Dorsolateral prefrontal cortex (tissue), 120 donors: ENCODE measurements at regions of chr3 and their contacts with region 1.

Region 1: GRCh38 chr3:49411968-49412631 is at the starts of genes RHOA and TCTA:
- DNase-seq: peak; percentile 98 to 100 (median 99)
- H3K4me3 ChIP-seq: peak within 1 kb of the TSS; percentile 69 to 100 (median 93)
- H3K27ac ChIP-seq: peak within 1 kb of the TSS; percentile 57 to 99 (median 94)
- H3K27me3 ChIP-seq: no peaks in the 10 kb centered on the region
- CTCF ChIP-seq: peak in 11 of 56 donors; percentile 5 to 39 (median 22)
- total RNA-seq, gene RHOA: 181 to 317 (median 228) TPM
- total RNA-seq, gene TCTA: 29.6 to 55.0 (median 40.9) TPM

Region 2: GRCh38 chr3:49021813-49022687 is 390.1 kb before region 1 on chr3 and contains the start of gene NDUFAF3:
- intact Hi-C with region 1: loop called in 1 of 2 experiments (anchors 10 kb)
- DNase-seq: peak; percentile 85 to 95 (median 91)
- H3K4me3 ChIP-seq: peak within 1 kb of the TSS; percentile 73 to 100 (median 98)
- H3K27ac ChIP-seq: peak within 1 kb of the TSS; percentile 76 to 99 (median 97)
- H3K27me3 ChIP-seq: no peaks in the 10 kb centered on the region
- CTCF ChIP-seq: peak; percentile 80 to 99 (median 96)
- total RNA-seq, gene NDUFAF3: 57.3 to 129 (median 81.1) TPM

Region 3: GRCh38 chr3:49093853-49094767 is 318.0 kb before region 1 on chr3 and contains the start of gene QRICH1:
- intact Hi-C with region 1: loop called (anchors 5 kb)
- DNase-seq: peak; percentile 89 to 97 (median 96)
- H3K4me3 ChIP-seq: peak within 1 kb of the TSS; percentile 60 to 99 (median 91)
- H3K27ac ChIP-seq: peak within 1 kb of the TSS; percentile 81 to 100 (median 96)
- H3K27me3 ChIP-seq: no peaks in the 10 kb centered on the region
- CTCF ChIP-seq: peak in 45 of 56 donors; percentile 8 to 65 (median 33)
- total RNA-seq, gene QRICH1: 86.4 to 157 (median 121) TPM

Region 4: GRCh38 chr3:49339945-49340800 is 71.9 kb before region 1 on chr3 and contains the start of gene USP4:
- intact Hi-C with region 1: loop called (anchors 1 to 5 kb)
- DNase-seq: peak; percentile 63 to 92 (median 84)
- H3K4me3 ChIP-seq: peak within 1 kb of the TSS; percentile 58 to 97 (median 87)
- H3K27ac ChIP-seq: peak within 1 kb of the TSS; percentile 54 to 97 (median 90)
- H3K27me3 ChIP-seq: no peaks in the 10 kb centered on the region
- CTCF ChIP-seq: peak in 51 of 56 donors; percentile 21 to 74 (median 47)
- total RNA-seq, gene USP4: 57.2 to 94.0 (median 74.4) TPM

Region 5: DNA sequence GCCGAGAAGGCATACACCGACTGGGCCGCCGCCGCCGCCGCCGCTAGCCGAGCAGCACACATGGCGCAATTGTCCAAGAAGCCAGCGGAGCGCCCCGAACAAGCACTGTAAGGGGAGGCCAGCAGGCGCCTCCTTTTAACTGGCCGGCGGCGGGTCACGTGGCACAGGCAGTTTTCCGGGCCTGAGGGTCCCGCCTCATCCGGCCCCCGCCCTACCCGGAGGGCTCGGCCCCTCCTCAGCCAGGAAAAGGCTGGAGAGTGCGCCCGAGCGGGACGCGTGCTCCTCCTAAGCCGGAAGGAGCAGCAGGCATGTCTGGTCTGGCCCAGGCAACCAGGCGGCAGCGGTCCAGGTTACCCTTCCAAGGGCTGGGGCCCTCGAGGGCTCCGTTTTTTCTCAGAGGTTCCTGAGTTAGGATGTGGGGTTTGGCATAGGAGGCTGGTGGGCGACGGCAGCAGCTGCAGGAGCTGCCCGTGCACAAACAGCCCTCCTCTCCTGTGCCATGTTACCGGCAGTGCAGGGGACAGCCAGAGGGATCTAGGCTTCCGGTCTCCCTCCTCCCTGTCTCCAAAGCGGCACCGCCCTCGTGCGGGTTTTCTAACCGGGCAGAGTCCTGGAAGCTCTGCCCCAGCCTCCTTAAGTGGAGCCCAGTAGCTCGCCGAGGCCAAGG is 53.8 kb before region 1 on chr3 and contains the start of gene GPX1:
- intact Hi-C with region 1: loop called in 1 of 2 experiments (anchors 5 kb)
- DNase-seq: peak; percentile 90 to 96 (median 94)
- H3K4me3 ChIP-seq: peak within 1 kb of the TSS; percentile 53 to 88 (median 78)
- H3K27ac ChIP-seq: peak within 1 kb of the TSS; percentile 62 to 96 (median 88)
- H3K27me3 ChIP-seq: no peaks in the 10 kb centered on the region
- CTCF ChIP-seq: peak in 22 of 56 donors; percentile 7 to 48 (median 26)
- total RNA-seq, gene GPX1: 82.0 to 191 (median 135) TPM

Region 6: GRCh38 chr3:49428697-49429100 is 16.6 kb after region 1 on chr3:
- intact Hi-C with region 1: loop called (anchors 2 kb)
- DNase-seq: no peak
- H3K4me3 ChIP-seq: peak overlapping the region; percentile 60 to 93 (median 79)
- H3K27ac ChIP-seq: peak overlapping the region in 58 of 59 donors; percentile 68 to 98 (median 90)
- H3K27me3 ChIP-seq: no peaks in the 10 kb centered on the region
- CTCF ChIP-seq: peak in 2 of 56 donors; percentile 1 to 21

Region 7: GRCh38 chr3:49469936-49470713 is 58.0 kb after region 1 on chr3 and contains the start of gene DAG1:
- intact Hi-C with region 1: loop called (anchors 2 to 5 kb)
- DNase-seq: peak; percentile 90 to 97 (median 96)
- H3K4me3 ChIP-seq: peak within 1 kb of the TSS; percentile 72 to 98 (median 87)
- H3K27ac ChIP-seq: peak within 1 kb of the TSS; percentile 86 to 99 (median 96)
- H3K27me3 ChIP-seq: no peaks in the 10 kb centered on the region
- CTCF ChIP-seq: peak in 11 of 56 donors; percentile 7 to 46 (median 17)
- total RNA-seq, gene DAG1: 41.2 to 99.6 (median 56.6) TPM